Activated CD4-positive, alpha-beta memory T cell treated with anti-CD3 and anti-CD28 coated beads, Interleukin-2, amount 10 ng/mL, durations not matched to agents 7 days and 5 days (primary cell): ENCODE measurements at regions of chr11 and their contacts with region 1.

Region 1: GRCh38 chr11:64304316-64305072 is 830 bp upstream of the ESRRA start:
- DNase-seq: peak; percentile 95
- H3K4me3 Mint-ChIP-seq: peak overlapping the region; percentile 87
- H3K27ac Mint-ChIP-seq: peak overlapping the region; percentile 97
- H3K4me1 Mint-ChIP-seq: peaks cover 48% of the 10 kb centered on the region
- H3K27me3 Mint-ChIP-seq: peaks cover 18% of the 10 kb centered on the region

Region 2: DNA sequence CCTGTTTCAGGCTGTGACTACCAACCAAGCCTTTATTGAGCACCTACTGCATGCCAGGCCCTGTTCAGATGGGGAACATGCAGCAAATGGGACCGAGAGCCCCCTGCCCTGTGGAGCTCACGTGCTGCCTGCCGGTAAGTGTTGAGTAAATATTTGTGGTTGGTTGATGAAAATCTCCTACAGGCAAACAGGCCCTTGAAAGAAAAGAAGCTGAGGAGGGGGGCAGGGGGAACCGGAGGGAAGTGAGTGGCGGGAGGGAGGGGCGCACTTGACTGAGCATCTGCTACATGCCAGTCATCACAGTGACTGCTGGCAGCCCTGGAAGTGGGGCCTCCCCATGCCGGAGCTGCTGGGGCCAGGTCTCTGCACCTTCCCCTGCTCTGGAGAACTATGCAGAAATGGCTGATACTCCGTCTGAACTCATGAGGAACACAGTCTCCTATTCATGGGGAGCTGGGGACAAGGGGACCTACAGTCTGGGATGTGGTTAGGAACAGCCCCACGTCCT is 172.8 kb before region 1 on chr11:
- CTCF ChIA-PET with region 1: no interaction called
- POLR2A ChIA-PET with region 1: no interaction called
- DNase-seq: no peak
- H3K4me3 Mint-ChIP-seq: no peak overlapping the region
- H3K27ac Mint-ChIP-seq: no peak overlapping the region
- H3K4me1 Mint-ChIP-seq: no peaks in the 10 kb centered on the region
- H3K27me3 Mint-ChIP-seq: no peaks in the 10 kb centered on the region

Region 3: DNA sequence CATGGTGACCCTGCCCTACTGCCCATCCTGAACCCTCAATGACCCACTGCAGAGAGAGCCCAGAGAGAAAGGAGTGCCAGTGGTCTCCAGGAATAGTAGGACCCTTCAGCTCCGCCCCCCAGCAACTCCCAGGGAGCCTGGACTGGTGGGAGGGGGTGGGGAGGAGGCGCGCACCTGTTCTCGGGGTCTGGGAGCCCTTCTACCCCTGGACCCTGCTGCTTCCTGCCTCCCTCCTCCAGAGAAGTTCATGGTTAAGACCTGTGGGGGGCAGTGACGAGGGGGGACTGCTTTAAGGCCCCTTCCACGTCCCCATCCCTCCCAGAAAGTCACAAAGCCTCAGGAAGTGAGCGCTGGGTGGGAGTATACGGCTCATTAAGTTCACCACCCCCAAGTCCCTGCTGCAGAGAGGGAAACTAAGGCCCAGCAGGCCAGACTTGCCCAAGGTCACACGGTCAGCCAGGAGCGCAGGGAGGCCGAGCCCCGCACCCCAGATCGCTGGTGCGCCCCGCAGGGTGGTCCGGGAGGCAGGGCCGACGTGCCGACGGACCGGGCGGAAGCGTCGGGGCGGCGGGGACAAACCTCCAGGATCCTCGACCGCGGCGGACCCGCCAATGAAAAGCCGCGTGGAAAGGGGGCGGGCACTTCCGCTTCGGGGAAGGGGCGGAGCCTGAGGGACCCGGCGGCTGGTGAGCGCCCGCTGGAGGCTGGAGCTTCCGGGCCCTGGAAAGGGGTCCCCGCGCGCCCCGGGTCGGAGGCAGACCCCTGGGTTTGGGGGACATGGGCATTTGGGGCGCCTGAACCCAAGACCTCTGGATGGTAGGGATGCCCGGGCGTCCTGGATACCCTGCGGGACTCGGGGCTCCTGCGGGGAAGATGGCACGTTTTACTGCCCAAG is 78.6 kb before region 1 on chr11 and contains the starts of genes NUDT22 and TRPT1:
- CTCF ChIA-PET with region 1: interaction called, 9 read pairs
- POLR2A ChIA-PET with region 1: interaction called, 11 read pairs
- DNase-seq: peak; percentile 94
- H3K4me3 Mint-ChIP-seq: peak within 1 kb of the TSS; percentile 88
- H3K27ac Mint-ChIP-seq: peak within 1 kb of the TSS; percentile 79
- H3K4me1 Mint-ChIP-seq: peaks cover 40% of the 10 kb centered on the region
- H3K27me3 Mint-ChIP-seq: no peaks in the 10 kb centered on the region
- total RNA-seq, gene NUDT22: 84.8 to 90.6 TPM
- total RNA-seq, gene TRPT1: 34.7 to 35.3 TPM

Region 4: GRCh38 chr11:64246871-64247728 is 57.4 kb before region 1 on chr11 and contains the start of gene PPP1R14B:
- CTCF ChIA-PET with region 1: interaction called, 16 read pairs
- POLR2A ChIA-PET with region 1: interaction called, 20 read pairs
- DNase-seq: peak; percentile 84
- H3K4me3 Mint-ChIP-seq: peak within 1 kb of the TSS; percentile 86
- H3K27ac Mint-ChIP-seq: peak within 1 kb of the TSS; percentile 85
- H3K4me1 Mint-ChIP-seq: peaks cover 53% of the 10 kb centered on the region
- H3K27me3 Mint-ChIP-seq: peaks cover 3% of the 10 kb centered on the region
- total RNA-seq, gene PPP1R14B: 96.9 to 105 TPM

Region 5: DNA sequence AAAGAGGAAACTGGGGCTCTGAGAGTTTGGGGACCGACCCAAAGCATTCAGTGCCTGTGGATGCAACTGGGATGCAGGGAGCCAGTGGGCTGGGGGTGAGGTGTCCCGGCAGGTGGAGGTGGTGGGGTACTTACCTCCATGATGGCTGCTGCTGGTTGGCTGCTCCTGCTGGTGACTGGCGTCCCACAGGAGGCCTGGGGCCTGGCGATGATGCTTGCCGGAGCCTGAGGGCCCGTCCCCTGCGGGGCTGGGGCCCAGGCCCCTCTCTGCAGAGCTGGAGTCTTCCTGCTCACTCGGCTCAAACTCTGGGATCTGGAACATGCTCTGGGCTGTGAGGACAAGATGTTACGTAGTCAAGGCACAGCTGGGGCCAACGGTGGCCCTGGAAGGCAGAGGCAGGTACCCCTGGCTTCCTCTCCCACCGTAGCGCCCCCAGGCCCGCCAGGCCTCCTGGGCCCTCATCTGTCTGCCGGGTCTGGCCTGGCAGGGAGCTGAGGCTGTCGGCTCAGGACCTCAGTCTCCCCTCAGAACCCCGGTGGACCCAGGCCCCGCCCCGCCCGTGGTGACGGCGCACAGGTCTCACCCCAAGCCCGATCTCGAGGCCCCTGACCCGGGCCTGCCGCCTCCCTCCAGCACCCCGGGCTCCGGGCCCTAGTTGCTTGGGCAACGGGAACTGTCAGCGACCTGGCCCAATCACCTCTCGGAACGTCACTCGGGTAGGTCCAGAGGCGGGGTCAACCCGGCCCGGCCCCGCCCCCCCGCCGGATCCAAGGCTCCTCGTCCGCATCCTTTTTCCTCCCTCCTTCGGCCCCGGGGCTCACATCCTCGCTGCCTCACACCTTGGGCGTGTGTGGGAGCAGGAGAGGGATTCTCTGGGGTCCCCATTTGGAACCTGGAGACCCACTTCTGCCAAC is 20.2 kb before region 1 on chr11 and contains the start of gene BAD:
- CTCF ChIA-PET with region 1: interaction called, 42 read pairs
- POLR2A ChIA-PET with region 1: interaction called, 41 read pairs
- DNase-seq: peak; percentile 95
- H3K4me3 Mint-ChIP-seq: peak within 1 kb of the TSS; percentile 83
- H3K27ac Mint-ChIP-seq: peak within 1 kb of the TSS; percentile 82
- H3K4me1 Mint-ChIP-seq: peaks cover 28% of the 10 kb centered on the region
- H3K27me3 Mint-ChIP-seq: no peaks in the 10 kb centered on the region
- total RNA-seq, gene BAD: 36.5 to 39.2 TPM

Region 6: DNA sequence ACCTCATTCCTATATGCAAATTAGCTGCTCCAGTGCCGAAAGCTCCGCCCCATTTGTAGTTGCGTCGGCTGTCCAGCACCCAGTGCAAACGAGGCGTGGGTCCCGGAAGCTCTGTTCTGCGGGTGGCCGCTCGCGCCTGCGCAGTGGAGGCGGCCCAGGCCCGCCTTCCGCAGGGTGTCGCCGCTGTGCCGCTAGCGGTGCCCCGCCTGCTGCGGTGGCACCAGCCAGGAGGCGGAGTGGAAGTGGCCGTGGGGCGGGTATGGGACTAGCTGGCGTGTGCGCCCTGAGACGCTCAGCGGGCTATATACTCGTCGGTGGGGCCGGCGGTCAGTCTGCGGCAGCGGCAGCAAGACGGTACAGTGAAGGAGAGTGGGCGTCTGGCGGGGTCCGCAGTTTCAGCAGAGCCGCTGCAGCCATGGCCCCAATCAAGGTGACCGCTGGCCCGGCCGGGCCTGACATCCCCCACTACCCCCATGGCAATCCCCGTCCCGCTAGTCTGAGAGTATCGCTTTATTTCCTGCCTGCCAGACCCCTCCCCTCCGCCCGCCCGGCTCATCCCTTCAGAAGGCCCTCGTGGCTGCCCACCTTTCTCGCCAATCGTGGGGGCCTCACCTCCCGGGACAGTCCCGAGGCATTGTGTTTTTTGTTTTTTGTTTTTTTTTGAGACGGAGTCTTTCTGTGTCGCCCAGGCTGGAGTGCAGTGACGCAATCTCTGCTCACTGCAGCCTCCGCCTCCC is 13.6 kb after region 1 on chr11 and contains the start of gene PRDX5:
- CTCF ChIA-PET with region 1: interaction called, 68 read pairs
- POLR2A ChIA-PET with region 1: interaction called, 68 read pairs
- DNase-seq: peak; percentile 96
- H3K4me3 Mint-ChIP-seq: peak within 1 kb of the TSS; percentile 91
- H3K27ac Mint-ChIP-seq: peak within 1 kb of the TSS; percentile 96
- H3K4me1 Mint-ChIP-seq: peaks cover 53% of the 10 kb centered on the region
- H3K27me3 Mint-ChIP-seq: no peaks in the 10 kb centered on the region
- total RNA-seq, gene PRDX5: 137 to 139 TPM

Region 7: DNA sequence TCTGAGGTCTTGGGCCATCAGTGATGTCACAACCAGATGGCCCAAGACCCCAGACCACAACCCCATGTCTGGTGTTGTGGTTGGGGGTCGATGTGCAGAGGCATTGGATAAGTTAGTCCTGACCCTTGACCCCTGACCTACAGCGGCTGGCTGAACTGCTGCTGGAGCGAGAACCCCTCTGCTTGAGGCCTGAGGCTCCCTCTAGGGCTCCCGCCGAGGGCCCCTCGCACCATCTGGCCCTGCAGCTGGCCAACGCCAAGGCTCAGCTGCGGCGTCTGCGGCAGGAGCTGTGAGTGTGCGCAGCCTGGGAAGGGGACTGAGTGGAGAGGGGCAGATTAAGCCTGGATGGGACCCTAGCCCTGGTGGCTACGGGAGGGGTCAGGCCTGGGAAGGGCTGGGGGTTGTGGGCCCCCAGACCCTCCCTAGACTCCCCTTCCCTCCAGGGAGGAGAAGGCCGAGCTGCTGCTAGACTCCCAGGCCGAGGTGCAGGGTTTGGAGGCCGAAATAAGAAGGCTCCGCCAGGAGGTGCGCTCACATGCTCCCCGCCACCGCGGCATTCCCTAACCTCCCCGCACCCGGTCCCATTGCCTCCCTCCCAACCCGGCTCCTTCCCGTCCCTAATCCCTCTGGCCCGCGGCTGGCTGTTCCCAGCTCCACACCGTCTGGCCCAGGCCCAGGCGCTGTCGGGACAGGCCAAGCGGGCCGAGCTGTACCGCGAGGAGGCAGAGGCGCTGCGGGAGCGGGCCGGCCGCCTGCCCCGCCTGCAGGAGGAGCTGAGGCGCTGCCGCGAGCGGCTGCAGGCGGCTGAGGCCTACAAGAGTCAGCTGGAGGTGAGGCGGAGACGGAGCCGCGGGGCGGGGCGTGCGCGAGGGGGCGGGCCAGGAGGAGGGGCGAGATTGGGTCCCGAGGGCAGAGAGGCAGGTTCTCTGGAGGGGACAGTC is 37.6 kb after region 1 on chr11:
- CTCF ChIA-PET with region 1: interaction called, 11 read pairs
- POLR2A ChIA-PET with region 1: interaction called, 8 read pairs
- DNase-seq: peak; percentile 95
- H3K4me3 Mint-ChIP-seq: peak overlapping the region; percentile 54
- H3K27ac Mint-ChIP-seq: no peak overlapping the region
- H3K4me1 Mint-ChIP-seq: peaks cover 62% of the 10 kb centered on the region
- H3K27me3 Mint-ChIP-seq: no peaks in the 10 kb centered on the region